Activated CD8-positive, alpha-beta memory T cell treated with anti-CD3 and anti-CD28 coated beads, Interleukin-2, amount 10 ng/mL, durations not matched to agents 7 days and 5 days (primary cell): ENCODE measurements at regions of chr15 and their contacts with region 1.

Region 1: GRCh38 chr15:42920519-42921227 is at the start of gene TTBK2:
- DNase-seq: peak; percentile 98
- ATAC-seq: peak; percentile 97
- H3K4me3 Mint-ChIP-seq: peak within 1 kb of the TSS; percentile 95
- H3K27ac Mint-ChIP-seq: peak within 1 kb of the TSS; percentile 89
- H3K4me1 Mint-ChIP-seq: peaks cover 38% of the 10 kb centered on the region
- H3K27me3 Mint-ChIP-seq: no peaks in the 10 kb centered on the region
- total RNA-seq, gene TTBK2: 12.9 to 20.0 TPM

Region 2: GRCh38 chr15:42704492-42704926 is 216.2 kb before region 1 on chr15:
- CTCF ChIA-PET with region 1: interaction called, 27 read pairs
- DNase-seq: peak; percentile 77
- ATAC-seq: peak; percentile 96
- H3K4me3 Mint-ChIP-seq: no peak overlapping the region
- H3K27ac Mint-ChIP-seq: no peak overlapping the region
- H3K4me1 Mint-ChIP-seq: no peaks in the 10 kb centered on the region
- H3K27me3 Mint-ChIP-seq: no peaks in the 10 kb centered on the region

Region 3: DNA sequence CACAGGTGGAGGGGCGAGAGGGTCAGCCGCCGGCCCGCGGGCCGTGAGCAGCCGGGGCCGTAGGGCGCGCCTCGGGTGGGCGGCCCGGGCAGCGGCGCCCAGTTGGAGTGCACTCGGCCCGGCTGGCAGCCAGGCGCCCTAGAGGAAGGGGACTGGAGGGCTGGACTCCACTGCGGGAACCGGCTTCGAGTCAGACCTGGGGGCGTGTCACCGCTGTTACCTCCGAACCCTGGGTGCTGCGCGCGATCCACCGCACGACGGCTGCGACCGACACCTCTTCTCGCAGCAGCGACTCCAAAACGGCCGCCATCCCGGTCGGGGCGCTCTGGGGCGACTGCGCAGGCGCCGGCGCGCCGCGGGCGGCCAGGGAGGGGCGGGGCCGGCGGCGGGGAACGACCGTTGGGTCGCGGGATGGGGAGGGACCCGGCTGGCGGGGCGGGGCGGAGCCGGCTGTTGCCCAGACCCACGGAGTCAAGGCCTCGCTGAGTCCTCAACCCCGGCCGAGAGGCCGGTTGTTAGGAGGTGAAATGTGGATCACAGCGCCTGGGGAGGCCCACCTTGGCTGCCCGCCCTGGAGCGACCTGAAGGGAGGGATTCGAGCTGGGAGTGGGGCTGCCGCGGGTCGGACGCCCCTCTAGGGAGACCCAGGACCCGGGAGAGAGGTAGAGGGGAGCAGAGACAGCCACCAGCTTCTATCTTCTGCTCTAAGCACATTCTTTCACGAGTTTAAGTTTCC is 183.7 kb before region 1 on chr15 and contains the start of gene CDAN1:
- CTCF ChIA-PET with region 1: interaction called, 15 read pairs
- DNase-seq: peak; percentile 94
- ATAC-seq: peak; percentile 96
- H3K4me3 Mint-ChIP-seq: peak within 1 kb of the TSS; percentile 75
- H3K27ac Mint-ChIP-seq: peak within 1 kb of the TSS; percentile 79
- H3K4me1 Mint-ChIP-seq: peaks cover 19% of the 10 kb centered on the region
- H3K27me3 Mint-ChIP-seq: no peaks in the 10 kb centered on the region
- total RNA-seq, gene CDAN1: 29.0 to 39.2 TPM

Region 4: GRCh38 chr15:42939841-42940240 is 19.2 kb after region 1 on chr15:
- CTCF ChIA-PET with region 1: no interaction called
- DNase-seq: no peak
- ATAC-seq: no peak
- H3K4me3 Mint-ChIP-seq: no peak overlapping the region
- H3K27ac Mint-ChIP-seq: no peak overlapping the region
- H3K4me1 Mint-ChIP-seq: no peaks in the 10 kb centered on the region
- H3K27me3 Mint-ChIP-seq: no peaks in the 10 kb centered on the region

Region 5: DNA sequence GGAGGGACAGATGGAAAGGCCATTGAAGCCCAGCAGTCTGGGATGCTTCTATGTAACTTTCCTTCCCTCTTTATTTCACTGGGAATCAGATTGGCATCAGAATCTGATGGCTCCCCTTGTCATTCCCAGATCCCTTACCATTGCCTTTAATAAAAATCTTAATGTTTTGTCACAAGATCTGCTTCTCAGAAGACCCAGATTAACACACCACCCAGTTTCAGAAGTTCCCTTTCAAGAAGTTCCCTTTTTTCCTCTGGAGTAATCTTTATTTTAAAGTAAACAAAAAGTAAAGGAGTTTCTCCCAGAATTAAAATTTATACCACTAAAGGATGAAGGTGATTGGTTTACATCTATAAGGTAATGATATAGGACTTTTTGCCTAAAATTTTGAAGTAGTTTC is 108.8 kb after region 1 on chr15:
- CTCF ChIA-PET with region 1: no interaction called
- DNase-seq: no peak
- ATAC-seq: no peak
- H3K4me3 Mint-ChIP-seq: no peak overlapping the region
- H3K27ac Mint-ChIP-seq: no peak overlapping the region
- H3K4me1 Mint-ChIP-seq: peaks cover 14% of the 10 kb centered on the region
- H3K27me3 Mint-ChIP-seq: no peaks in the 10 kb centered on the region

Region 6: DNA sequence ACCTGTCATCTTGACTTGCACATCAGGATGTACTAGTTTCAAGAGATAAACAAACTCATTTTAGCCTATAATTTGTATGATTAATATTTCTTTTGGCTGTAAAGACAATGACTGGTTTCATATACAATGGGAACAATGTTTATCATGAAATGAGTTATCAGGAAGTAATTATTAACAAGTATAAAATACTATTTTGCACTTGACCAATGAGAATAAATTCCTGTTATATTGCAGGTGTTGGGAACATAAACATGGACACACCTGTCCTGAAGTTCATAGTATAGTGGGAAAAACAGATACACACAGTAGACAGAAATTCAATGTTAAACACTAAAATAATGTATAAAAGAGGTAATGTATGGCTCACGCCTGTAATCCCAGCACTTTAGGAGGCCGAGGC is 128.3 kb after region 1 on chr15:
- CTCF ChIA-PET with region 1: no interaction called
- DNase-seq: no peak
- ATAC-seq: no peak
- H3K4me3 Mint-ChIP-seq: no peak overlapping the region
- H3K27ac Mint-ChIP-seq: no peak overlapping the region
- H3K4me1 Mint-ChIP-seq: no peaks in the 10 kb centered on the region
- H3K27me3 Mint-ChIP-seq: no peaks in the 10 kb centered on the region